PC-3 (cell line): ENCODE measurements at regions of chr1 and their contacts with region 1.

Region 1: GRCh38 chr1:8040586-8040985 is 14.5 kb upstream of the ERRFI1 start:
- DNase-seq: peak; percentile 99
- ATAC-seq: peak; percentile 97
- H3K4me3 ChIP-seq: no peak overlapping the region
- H3K27ac ChIP-seq: peak overlapping the region; percentile 85
- H3K4me1 ChIP-seq: peaks cover 30% of the 10 kb centered on the region
- H3K27me3 ChIP-seq: no peaks in the 10 kb centered on the region
- CTCF ChIP-seq: no peak

Region 2: GRCh38 chr1:7940745-7941436 is 99.7 kb before region 1 on chr1 and contains the start of gene TNFRSF9:
- CTCF ChIA-PET with region 1: no interaction called
- POLR2A ChIA-PET with region 1: no interaction called
- intact Hi-C with region 1: no loop called
- DNase-seq: peak; percentile 38
- ATAC-seq: peak; percentile 49; the same call in 1 of the 2 replicates
- H3K4me3 ChIP-seq: no peak within 1 kb of the TSS
- H3K27ac ChIP-seq: no peak within 1 kb of the TSS
- H3K4me1 ChIP-seq: peaks cover 9% of the 10 kb centered on the region; the same call in 1 of the 2 replicates
- H3K27me3 ChIP-seq: peaks cover 24% of the 10 kb centered on the region
- CTCF ChIP-seq: no peak
- total RNA-seq, gene TNFRSF9: 0.04 and 0.06 TPM in 2 replicates

Region 3: DNA sequence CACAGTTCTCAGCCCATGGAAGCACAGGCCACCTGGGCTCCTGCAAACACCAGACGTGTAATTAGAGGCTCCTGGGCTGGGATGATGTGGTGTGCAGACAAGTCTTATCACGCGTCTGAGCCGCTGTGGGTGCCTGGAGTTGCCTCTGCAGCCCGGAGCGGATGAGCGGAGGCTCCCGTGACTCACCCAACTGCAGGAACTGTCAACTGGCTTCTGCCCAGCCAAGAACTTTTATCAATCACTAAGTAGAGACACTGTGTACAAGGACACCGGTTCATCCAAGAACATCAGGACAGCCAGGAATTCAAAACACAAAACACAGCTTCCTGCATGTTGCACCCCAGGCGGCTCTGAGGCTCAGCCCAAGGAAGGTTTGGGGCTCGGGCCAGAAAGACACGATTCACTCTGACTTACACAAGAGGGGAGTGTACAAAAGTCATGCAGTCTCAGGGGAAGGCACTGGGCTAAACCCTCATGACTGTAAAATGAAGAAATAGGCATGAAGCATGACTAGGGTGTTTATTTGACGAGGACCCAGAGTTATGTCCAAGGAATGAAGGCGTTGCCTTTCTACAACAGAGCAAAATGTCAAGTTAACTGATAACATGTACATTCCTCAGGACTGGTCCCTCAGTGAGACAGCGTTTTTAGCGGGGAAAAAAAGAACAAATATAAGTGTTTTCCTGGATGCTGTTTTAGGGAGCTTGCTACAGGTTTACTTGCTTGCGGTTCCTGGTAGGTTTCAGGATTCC is 35.6 kb before region 1 on chr1:
- CTCF ChIA-PET with region 1: no interaction called
- POLR2A ChIA-PET with region 1: no interaction called
- intact Hi-C with region 1: no loop called
- DNase-seq: peak; percentile 82
- ATAC-seq: peak; percentile 52
- H3K4me3 ChIP-seq: no peak overlapping the region; the same call in 1 of the 2 replicates
- H3K27ac ChIP-seq: peak overlapping the region; percentile 53
- H3K4me1 ChIP-seq: peaks cover 42% of the 10 kb centered on the region
- H3K27me3 ChIP-seq: no peaks in the 10 kb centered on the region
- CTCF ChIP-seq: no peak

Region 4: DNA sequence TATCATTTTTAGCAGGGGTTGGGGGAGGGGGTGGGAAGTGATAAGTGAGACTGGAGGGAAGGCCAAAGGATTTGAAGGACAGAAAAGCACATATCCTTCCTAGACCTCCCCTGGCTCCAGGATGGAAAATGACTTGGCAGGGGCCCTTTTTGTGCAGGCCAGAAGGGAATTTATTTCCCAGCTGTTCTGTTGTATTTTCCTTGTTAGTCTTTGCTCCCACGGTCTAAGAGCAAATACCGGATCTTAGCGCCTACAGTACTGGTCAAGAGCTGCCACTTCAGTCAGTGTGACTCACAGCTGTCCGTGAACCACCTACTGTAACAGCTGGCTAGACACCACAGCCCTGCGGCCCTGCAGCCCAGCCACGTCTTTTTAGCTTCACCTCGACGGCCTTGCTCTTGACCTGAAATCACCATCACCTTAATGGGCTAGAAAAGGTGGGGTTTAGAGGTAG is 36.6 kb after region 1 on chr1:
- CTCF ChIA-PET with region 1: no interaction called
- POLR2A ChIA-PET with region 1: interaction called, 10 read pairs
- intact Hi-C with region 1: no loop called
- DNase-seq: peak; percentile 89
- ATAC-seq: peak; percentile 93
- H3K4me3 ChIP-seq: no peak overlapping the region
- H3K27ac ChIP-seq: peak overlapping the region; percentile 97
- H3K4me1 ChIP-seq: peaks cover 39% of the 10 kb centered on the region
- H3K27me3 ChIP-seq: no peaks in the 10 kb centered on the region
- CTCF ChIP-seq: no peak